ENCODE measurements at regions of chr20 and their contacts with region 1.

Region 1: DNA sequence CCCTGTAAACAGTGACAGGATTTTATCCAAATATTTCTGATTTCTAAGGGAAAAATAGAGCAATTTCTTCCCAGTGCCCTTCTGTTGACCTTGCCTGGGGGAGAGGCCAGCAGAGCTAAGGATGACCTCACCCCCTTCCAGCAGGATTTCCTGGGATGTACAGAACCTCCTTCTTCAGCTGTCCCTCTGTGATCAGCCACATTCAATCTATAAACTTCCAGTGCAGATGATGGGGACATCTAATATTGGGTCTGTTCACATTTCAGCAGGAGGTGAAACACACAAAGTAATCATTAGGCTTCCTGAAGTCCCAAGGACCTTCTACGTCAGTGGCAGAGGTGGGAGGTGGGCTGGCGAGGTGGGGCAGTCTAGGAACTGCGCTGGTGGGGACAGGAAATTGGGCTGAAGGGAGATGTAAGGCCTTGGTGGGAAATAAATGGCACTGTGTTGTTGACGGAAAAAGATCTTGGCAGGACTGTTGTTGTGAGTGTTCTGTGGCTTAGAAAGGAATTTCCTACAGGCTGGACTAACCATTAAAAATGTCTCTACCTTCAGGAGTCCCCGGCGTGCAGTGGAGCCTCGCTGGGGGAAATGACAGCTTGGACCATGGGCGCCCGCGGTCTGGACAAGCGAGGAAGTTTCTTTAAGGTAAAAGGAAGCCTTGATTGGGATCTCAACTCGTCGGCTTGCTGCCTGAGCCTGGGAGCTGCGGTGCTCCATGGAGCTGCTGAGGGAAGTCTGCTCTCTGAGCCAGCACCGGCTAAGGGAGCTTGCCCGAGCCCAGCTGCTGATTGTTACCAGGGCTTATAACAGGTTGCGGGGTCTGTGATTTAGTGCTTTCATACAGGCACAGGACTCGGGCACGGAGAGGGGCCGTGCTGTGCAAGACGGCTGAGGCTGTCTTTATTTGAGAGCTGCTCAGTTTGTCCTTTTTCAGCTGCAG is 127.9 kb upstream of the NAA20 start:
- DNase-seq: no peak
- H3K4me3 ChIP-seq: peak overlapping the region; percentile 37 to 56 (median 46)
- H3K27ac ChIP-seq: peak overlapping the region; percentile 85 to 87 (median 86)
- H3K4me1 ChIP-seq: peaks cover 66 to 77% (median 72%) of the 10 kb centered on the region in 4 donors
- H3K27me3 ChIP-seq: no peaks in the 10 kb centered on the region
- CTCF ChIP-seq: no peak
- EP300 ChIP-seq: no peak
- POLR2A ChIP-seq: no peak

Region 2: GRCh38 chr20:19784511-19785172 is 104.6 kb before region 1 on chr20:
- intact Hi-C with region 1: loop called (anchors 10 kb)
- DNase-seq: no peak
- H3K4me3 ChIP-seq: peak overlapping the region in 1 of 4 donors; percentile 3
- H3K27ac ChIP-seq: peak overlapping the region; percentile 1 to 57 (median 48)
- H3K4me1 ChIP-seq: peaks cover 30 to 34% (median 33%) of the 10 kb centered on the region in 4 donors
- H3K27me3 ChIP-seq: no peaks in the 10 kb centered on the region
- CTCF ChIP-seq: peak; percentile 79 to 86 (median 85)
- EP300 ChIP-seq: no peak
- POLR2A ChIP-seq: no peak

Region 3: GRCh38 chr20:19974626-19975435 is 85.5 kb after region 1 on chr20:
- intact Hi-C with region 1: loop called (anchors 5 kb)
- DNase-seq: peak; percentile 95
- H3K4me3 ChIP-seq: peak overlapping the region; percentile 60 to 66 (median 64)
- H3K27ac ChIP-seq: peak overlapping the region; percentile 92 to 93 (median 92)
- H3K4me1 ChIP-seq: peaks cover 47 to 68% (median 62%) of the 10 kb centered on the region in 4 donors
- H3K27me3 ChIP-seq: no peaks in the 10 kb centered on the region
- CTCF ChIP-seq: peak in 1 of 3 experiments; percentile 2
- EP300 ChIP-seq: no peak
- POLR2A ChIP-seq: peak; percentile 10

Region 4: DNA sequence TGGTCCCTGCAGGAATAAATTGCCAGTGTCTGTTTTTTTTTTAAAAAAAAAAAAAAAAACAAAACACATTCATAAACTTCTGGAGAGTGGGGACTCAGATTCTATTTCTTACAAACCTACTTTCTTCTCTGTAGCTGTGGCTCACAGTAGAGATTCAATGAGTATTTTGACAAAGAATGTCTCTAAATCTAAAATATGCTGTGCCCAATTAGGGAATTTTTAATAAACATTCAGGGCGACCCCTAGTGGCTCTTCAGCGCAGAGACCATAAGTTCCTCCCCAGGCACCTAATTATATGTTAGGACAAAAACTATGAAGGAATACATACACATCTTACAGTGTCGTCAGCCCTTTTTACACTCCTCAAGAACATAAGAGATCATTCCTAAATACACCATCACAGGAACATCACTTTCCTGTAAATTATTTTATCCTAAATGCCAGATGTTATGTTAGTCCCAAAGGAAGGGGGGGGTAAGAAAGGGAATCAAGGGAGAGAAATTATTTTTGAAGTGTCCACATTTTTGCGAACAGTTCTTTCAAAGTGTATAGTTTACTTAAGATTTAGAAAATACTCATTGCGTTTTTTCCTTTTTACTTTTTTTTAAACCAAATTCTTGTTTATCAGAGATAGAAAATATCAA is 106.1 kb after region 1 on chr20:
- intact Hi-C with region 1: loop called (anchors 5 kb)
- DNase-seq: no peak
- H3K4me3 ChIP-seq: no peak overlapping the region
- H3K27ac ChIP-seq: peak overlapping the region; percentile 14 to 81 (median 74)
- H3K4me1 ChIP-seq: peaks cover 63 to 78% (median 69%) of the 10 kb centered on the region in 4 donors
- H3K27me3 ChIP-seq: no peaks in the 10 kb centered on the region
- CTCF ChIP-seq: peak; percentile 82 to 85 (median 85)
- EP300 ChIP-seq: no peak
- POLR2A ChIP-seq: no peak

Region 5: DNA sequence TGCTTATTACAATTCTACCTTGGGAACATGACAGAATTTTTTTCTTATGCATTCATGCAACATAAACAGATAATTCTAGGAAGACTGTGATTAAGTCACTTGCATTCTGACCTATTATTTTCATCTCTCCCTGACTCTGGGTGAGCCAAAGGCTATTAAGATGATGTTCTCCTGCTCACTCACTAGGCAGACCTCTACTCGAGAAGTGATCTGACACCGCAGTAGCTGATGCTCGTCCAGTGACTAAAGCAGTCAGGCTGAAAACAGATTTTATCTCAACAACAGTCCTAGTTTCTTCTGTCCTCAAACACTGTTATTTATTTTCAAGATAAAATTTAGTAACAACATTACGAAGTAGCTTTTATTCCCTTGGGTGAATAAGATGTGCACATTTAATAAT is 145.2 kb after region 1 on chr20:
- intact Hi-C with region 1: no loop called
- DNase-seq: no peak
- H3K4me3 ChIP-seq: no peak overlapping the region
- H3K27ac ChIP-seq: no peak overlapping the region
- H3K4me1 ChIP-seq: peaks cover 0 to 8% (median 6%) of the 10 kb centered on the region in 4 donors
- H3K27me3 ChIP-seq: no peaks in the 10 kb centered on the region
- CTCF ChIP-seq: no peak
- EP300 ChIP-seq: no peak
- POLR2A ChIP-seq: no peak